PC-9 (cell line): ENCODE measurements at regions of chr15 and their contacts with region 1.

Region 1: DNA sequence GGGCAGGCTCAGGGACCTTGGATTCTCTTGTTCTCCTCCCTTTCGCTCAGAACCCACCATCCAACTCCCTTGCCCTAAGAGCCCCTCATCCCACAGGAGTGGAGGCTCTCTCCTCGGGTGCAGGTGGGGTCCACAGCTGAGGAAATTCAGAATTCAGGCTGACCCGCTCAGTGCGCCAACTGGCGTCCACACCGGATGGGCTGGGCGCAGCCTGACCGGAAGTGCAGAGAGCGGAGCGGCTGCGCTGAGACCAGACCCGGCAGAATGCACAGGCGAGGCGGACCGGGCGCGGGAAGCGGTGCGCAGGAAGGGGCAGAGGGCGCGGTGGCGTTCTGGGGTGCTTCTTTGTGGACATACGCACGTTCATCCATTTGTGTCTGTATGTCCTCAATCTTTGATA is 210.4 kb upstream of the NDN start:
- DNase-seq: no peak
- H3K4me3 ChIP-seq: no peak overlapping the region
- H3K27ac ChIP-seq: no peak overlapping the region
- H3K4me1 ChIP-seq: no peaks in the 10 kb centered on the region
- H3K27me3 ChIP-seq: 0 out of 2 replicates have a peak, but pooled peaks cover 3% of the 10 kb centered on the region
- CTCF ChIP-seq: no peak

Region 2: DNA sequence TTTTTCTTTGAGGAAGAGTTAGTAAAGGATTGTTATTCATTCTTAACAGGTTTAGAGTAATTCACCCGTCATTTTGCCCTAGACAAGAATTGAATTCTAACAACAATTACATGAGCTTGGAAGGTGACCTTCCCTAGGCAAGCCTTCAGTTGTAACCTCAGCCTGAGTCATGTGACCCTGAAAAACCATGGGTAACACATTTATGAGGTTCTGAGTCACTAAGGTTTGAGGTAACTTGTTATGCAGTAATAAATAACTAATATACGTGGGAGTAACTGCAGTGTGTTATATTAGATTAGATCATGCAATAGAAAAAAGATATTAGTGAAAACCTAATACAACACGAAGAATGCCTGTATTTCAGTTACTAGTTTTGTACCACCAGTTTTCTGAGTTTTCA is 27.2 kb after region 1 on chr15:
- CTCF ChIA-PET with region 1: no interaction called
- POLR2A ChIA-PET with region 1: no interaction called
- intact Hi-C with region 1: no loop called
- DNase-seq: no peak
- H3K4me3 ChIP-seq: no peak overlapping the region
- H3K27ac ChIP-seq: no peak overlapping the region
- H3K4me1 ChIP-seq: no peaks in the 10 kb centered on the region
- H3K27me3 ChIP-seq: no peaks in the 10 kb centered on the region
- CTCF ChIP-seq: no peak

Region 3: DNA sequence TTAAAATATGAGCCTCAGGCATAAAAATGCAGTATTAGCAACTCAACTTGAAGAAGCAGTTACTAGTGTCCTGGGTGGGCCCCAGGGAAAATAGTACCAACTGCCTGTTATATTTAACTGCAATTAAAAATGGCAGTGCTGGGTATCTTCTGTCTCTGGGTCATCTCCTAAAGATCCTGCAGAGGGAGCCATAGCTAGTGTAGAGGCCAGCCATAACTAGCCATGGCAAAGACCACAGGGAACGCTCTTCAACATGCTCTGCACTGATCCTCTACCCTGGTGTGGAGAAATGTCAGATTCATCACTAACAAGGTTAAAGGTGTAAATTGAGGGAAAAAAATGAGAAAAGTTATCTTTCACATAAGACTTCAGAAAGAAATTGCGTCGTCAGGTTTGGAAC is 1238.6 kb after region 1 on chr15:
- CTCF ChIA-PET with region 1: no interaction called
- POLR2A ChIA-PET with region 1: no interaction called
- intact Hi-C with region 1: no loop called
- DNase-seq: no peak
- H3K4me3 ChIP-seq: no peak overlapping the region
- H3K27ac ChIP-seq: no peak overlapping the region
- H3K4me1 ChIP-seq: no peaks in the 10 kb centered on the region
- H3K27me3 ChIP-seq: no peaks in the 10 kb centered on the region
- CTCF ChIP-seq: no peak; the same call in 1 of the 2 replicates

Region 4: GRCh38 chr15:25710184-25710583 is 1812.7 kb after region 1 on chr15:
- CTCF ChIA-PET with region 1: no interaction called
- POLR2A ChIA-PET with region 1: interaction called, 16 read pairs
- intact Hi-C with region 1: no loop called
- DNase-seq: peak in 1 of 2 experiments; percentile 20
- H3K4me3 ChIP-seq: no peak overlapping the region
- H3K27ac ChIP-seq: no peak overlapping the region
- H3K4me1 ChIP-seq: no peaks in the 10 kb centered on the region
- H3K27me3 ChIP-seq: peaks cover 41% of the 10 kb centered on the region
- CTCF ChIP-seq: peak; percentile 60